B cell (primary cell): ENCODE measurements at regions of chr19 and their contacts with region 1.

Region 1: DNA sequence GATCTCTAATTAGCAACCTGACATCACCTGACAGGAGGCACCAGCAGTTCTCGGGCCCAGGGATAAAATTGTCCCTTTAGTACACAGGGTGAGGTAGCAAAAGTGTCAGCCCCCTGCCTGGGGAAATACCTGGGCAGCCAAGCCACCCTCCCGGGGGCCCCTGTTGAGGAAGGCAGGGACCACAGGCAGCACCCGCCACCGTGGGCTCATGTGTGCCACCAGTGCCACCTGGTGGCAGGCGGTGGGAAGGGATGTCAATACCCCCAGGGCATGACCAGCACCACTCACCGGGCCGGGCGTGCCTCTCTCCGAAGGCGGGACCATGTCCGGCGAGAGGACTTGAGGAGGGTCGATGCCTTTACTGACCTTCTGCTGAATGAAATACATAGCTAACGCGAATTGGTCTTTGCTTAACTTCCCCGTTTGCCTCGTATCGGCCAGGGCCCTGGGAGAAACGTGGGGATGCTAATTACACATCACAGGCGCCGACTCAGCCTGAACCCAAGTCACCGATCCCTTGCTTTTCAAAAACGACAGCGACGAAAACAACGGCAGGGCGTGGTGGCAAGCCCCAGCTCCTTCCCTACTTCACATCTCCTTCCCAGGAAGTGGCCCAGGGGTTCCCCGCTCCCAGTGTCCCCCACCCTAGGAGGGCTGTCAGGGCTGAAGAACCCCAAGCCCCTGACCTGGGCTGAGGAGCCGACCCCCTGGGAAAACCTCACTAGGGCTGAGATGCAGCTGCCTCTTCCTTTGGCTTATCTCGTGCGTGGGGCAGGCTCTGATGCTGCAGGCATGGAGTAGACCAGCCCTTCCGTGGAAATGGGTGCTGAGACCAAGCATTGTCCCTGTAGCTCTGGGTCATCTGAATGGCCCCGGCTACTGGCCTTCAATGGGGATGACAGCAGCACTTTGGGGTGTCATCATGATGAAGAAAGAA is 53.8 kb downstream of the EPS15L1 start:
- DNase-seq: peak; percentile 92
- ATAC-seq: peak; percentile 80
- H3K4me3 ChIP-seq: peak overlapping the region in 4 of 5 experiments; percentile 15 to 52 (median 35)
- H3K4me3 Mint-ChIP-seq: peak overlapping the region; percentile 65
- H3K27ac ChIP-seq: peak overlapping the region; percentile 90 to 97
- H3K27ac Mint-ChIP-seq: peak overlapping the region; percentile 96
- H3K4me1 ChIP-seq: peaks cover 31 to 43% of the 10 kb centered on the region in 2 donors
- H3K4me1 Mint-ChIP-seq: peaks cover 34% of the 10 kb centered on the region
- H3K27me3 ChIP-seq: no peaks in the 10 kb centered on the region
- H3K27me3 Mint-ChIP-seq: no peaks in the 10 kb centered on the region
- CTCF ChIP-seq: peak; percentile 97

Region 2: GRCh38 chr19:16095071-16095571 is 322.8 kb before region 1 on chr19:
- CTCF ChIA-PET with region 1: no interaction called
- POLR2A ChIA-PET with region 1: no interaction called
- intact Hi-C with region 1: no loop called
- DNase-seq: peak; percentile 40
- ATAC-seq: peak; percentile 43
- H3K4me3 ChIP-seq: no peak overlapping the region
- H3K4me3 Mint-ChIP-seq: no peak overlapping the region
- H3K27ac ChIP-seq: peak overlapping the region in 1 of 2 donors; percentile 11
- H3K27ac Mint-ChIP-seq: peak overlapping the region; percentile 69
- H3K4me1 ChIP-seq: peaks cover 7 to 10% of the 10 kb centered on the region in 2 donors
- H3K4me1 Mint-ChIP-seq: peaks cover 18% of the 10 kb centered on the region
- H3K27me3 ChIP-seq: no peaks in the 10 kb centered on the region
- H3K27me3 Mint-ChIP-seq: no peaks in the 10 kb centered on the region
- CTCF ChIP-seq: no peak

Region 3: GRCh38 chr19:16118489-16119033 is 299.4 kb before region 1 on chr19:
- CTCF ChIA-PET with region 1: interaction called, 4 read pairs
- POLR2A ChIA-PET with region 1: no interaction called
- intact Hi-C with region 1: loop called (anchors 1 kb)
- DNase-seq: peak; percentile 93
- ATAC-seq: peak; percentile 91
- H3K4me3 ChIP-seq: peak overlapping the region in 3 of 5 experiments; percentile 11 to 48 (median 23)
- H3K4me3 Mint-ChIP-seq: peak overlapping the region; percentile 70
- H3K27ac ChIP-seq: peak overlapping the region; percentile 86 to 88
- H3K27ac Mint-ChIP-seq: peak overlapping the region; percentile 97
- H3K4me1 ChIP-seq: peaks cover 64 to 75% of the 10 kb centered on the region in 2 donors
- H3K4me1 Mint-ChIP-seq: peaks cover 66% of the 10 kb centered on the region
- H3K27me3 ChIP-seq: no peaks in the 10 kb centered on the region
- H3K27me3 Mint-ChIP-seq: no peaks in the 10 kb centered on the region
- CTCF ChIP-seq: no peak

Region 4: GRCh38 chr19:16247353-16248182 is 170.4 kb before region 1 on chr19:
- CTCF ChIA-PET with region 1: interaction called, 168 read pairs
- POLR2A ChIA-PET with region 1: interaction called, 29 read pairs
- intact Hi-C with region 1: loop called (anchors 1 kb)
- DNase-seq: peak; percentile 88
- ATAC-seq: peak; percentile 88
- H3K4me3 ChIP-seq: no peak overlapping the region
- H3K4me3 Mint-ChIP-seq: peak overlapping the region; percentile 59
- H3K27ac ChIP-seq: peak overlapping the region; percentile 4 to 66
- H3K27ac Mint-ChIP-seq: peak overlapping the region; percentile 88
- H3K4me1 ChIP-seq: peaks cover 34 to 60% of the 10 kb centered on the region in 2 donors
- H3K4me1 Mint-ChIP-seq: peaks cover 34% of the 10 kb centered on the region
- H3K27me3 ChIP-seq: no peaks in the 10 kb centered on the region
- H3K27me3 Mint-ChIP-seq: no peaks in the 10 kb centered on the region
- CTCF ChIP-seq: peak; percentile 87

Region 5: GRCh38 chr19:16330368-16330801 is 87.5 kb before region 1 on chr19:
- CTCF ChIA-PET with region 1: interaction called, 81 read pairs
- POLR2A ChIA-PET with region 1: interaction called, 67 read pairs
- intact Hi-C with region 1: loop called (anchors 1 kb)
- DNase-seq: peak; percentile 95
- ATAC-seq: peak; percentile 63
- H3K4me3 ChIP-seq: peak overlapping the region in 1 of 5 experiments; percentile 20
- H3K4me3 Mint-ChIP-seq: peak overlapping the region; percentile 70
- H3K27ac ChIP-seq: peak overlapping the region; percentile 23 to 35
- H3K27ac Mint-ChIP-seq: peak overlapping the region; percentile 98
- H3K4me1 ChIP-seq: peaks cover 24 to 40% of the 10 kb centered on the region in 2 donors
- H3K4me1 Mint-ChIP-seq: peaks cover 51% of the 10 kb centered on the region
- H3K27me3 ChIP-seq: no peaks in the 10 kb centered on the region
- H3K27me3 Mint-ChIP-seq: no peaks in the 10 kb centered on the region
- CTCF ChIP-seq: no peak

Region 6: DNA sequence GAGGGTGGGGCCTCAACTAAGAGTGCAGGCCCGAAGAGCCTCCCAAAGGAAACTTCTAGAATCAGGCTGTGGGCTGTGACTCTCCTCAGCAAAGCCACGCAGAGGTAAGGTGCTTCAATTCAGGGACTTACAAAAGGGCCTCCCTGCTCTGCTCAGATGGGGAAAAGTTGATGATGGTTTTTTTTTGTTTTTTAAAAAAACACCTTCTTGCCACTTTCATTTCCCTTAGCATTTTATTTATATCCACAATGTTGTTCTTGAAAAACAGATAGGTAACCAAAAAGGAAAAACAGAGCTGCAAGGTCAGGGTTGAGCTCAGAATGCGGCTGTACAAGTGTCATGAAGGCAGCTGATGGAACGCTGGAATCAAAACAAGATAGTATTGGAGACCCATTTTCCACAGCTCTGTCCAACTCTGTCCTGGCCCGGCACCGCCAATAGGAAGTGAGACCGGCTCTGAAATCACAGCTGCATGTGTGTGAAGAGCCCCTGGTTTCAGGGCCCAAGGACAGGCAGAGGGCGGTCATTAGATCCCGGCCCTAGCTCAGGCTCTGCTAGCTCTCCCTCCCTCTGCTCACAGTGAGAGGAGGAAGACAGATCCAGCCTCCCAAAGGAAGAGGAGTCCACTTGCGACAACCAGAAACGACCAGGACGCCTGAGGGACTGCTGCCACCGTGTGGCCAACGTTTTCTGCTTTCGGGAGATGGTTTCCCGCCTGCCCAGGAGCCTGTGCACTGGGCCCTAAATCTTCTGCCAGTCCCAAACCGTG is 35.0 kb before region 1 on chr19:
- CTCF ChIA-PET with region 1: interaction called, 69 read pairs
- POLR2A ChIA-PET with region 1: interaction called, 18 read pairs
- intact Hi-C with region 1: loop called (anchors 1 kb)
- DNase-seq: peak; percentile 86
- ATAC-seq: peak; percentile 68
- H3K4me3 ChIP-seq: peak overlapping the region in 4 of 5 experiments; percentile 2 to 33 (median 17)
- H3K4me3 Mint-ChIP-seq: peak overlapping the region; percentile 81
- H3K27ac ChIP-seq: peak overlapping the region; percentile 93 to 95
- H3K27ac Mint-ChIP-seq: peak overlapping the region; percentile 99
- H3K4me1 ChIP-seq: peaks cover 63 to 89% of the 10 kb centered on the region in 2 donors
- H3K4me1 Mint-ChIP-seq: peaks cover 81% of the 10 kb centered on the region
- H3K27me3 ChIP-seq: no peaks in the 10 kb centered on the region
- H3K27me3 Mint-ChIP-seq: no peaks in the 10 kb centered on the region
- CTCF ChIP-seq: peak; percentile 78

Region 7: GRCh38 chr19:16446724-16447368 is 28.9 kb after region 1 on chr19:
- CTCF ChIA-PET with region 1: interaction called, 6 read pairs
- POLR2A ChIA-PET with region 1: interaction called, 3 read pairs
- intact Hi-C with region 1: loop called (anchors 2 kb)
- DNase-seq: peak; percentile 79
- ATAC-seq: peak; percentile 34
- H3K4me3 ChIP-seq: peak overlapping the region in 1 of 5 experiments; percentile 26
- H3K4me3 Mint-ChIP-seq: peak overlapping the region; percentile 76
- H3K27ac ChIP-seq: peak overlapping the region; percentile 93 to 98
- H3K27ac Mint-ChIP-seq: peak overlapping the region; percentile 97
- H3K4me1 ChIP-seq: peaks cover 86 to 94% of the 10 kb centered on the region in 2 donors
- H3K4me1 Mint-ChIP-seq: peaks cover 85% of the 10 kb centered on the region
- H3K27me3 ChIP-seq: no peaks in the 10 kb centered on the region
- H3K27me3 Mint-ChIP-seq: no peaks in the 10 kb centered on the region
- CTCF ChIP-seq: no peak